Ascending aorta (tissue), 2 donors: ENCODE measurements at regions of chr13 and their contacts with region 1.

Region 1: DNA sequence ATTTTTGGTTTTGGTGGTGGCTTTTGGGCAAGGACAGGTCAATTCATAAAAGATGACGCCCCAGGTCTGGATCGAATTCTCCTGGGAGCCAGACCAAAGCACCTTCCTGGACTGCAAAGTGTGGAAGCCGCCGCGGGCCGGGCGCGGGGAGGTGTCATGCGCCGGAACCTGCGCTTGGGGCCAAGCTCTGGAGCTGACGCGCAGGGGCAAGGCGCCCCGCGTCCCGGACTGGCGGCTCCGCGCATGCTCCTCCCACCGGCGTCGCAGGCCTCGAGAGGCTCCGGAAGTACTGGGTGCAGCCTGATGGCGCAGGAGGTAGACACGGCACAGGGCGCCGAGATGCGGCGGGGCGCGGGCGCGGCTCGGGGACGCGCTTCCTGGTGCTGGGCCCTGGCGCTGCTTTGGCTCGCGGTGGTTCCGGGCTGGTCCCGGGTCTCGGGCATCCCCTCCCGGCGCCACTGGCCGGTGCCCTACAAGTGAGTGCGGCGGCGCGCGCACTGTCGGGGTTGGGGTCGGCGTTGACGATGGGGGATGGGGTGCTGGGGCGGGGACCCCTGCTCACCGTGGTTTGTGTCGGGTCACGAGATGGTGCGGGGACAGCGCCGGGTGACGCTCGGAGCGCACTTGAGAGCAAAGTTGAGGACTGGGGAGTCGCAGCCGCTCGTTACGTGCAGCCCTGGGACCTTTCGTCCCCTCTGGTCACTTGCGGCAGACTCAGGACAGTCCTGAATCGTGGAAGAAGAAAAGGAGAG is at the start of gene CLN5:
- DNase-seq: peak; percentile 82 to 97
- H3K4me3 ChIP-seq: peak within 1 kb of the TSS; percentile 68 to 75
- H3K27ac ChIP-seq: peak within 1 kb of the TSS; percentile 80 to 93
- H3K4me1 ChIP-seq: peaks cover 0 to 9% of the 10 kb centered on the region in 2 donors
- H3K27me3 ChIP-seq: no peaks in the 10 kb centered on the region
- CTCF ChIP-seq: no peak
- total RNA-seq, gene CLN5: 2.0 TPM

Region 2: DNA sequence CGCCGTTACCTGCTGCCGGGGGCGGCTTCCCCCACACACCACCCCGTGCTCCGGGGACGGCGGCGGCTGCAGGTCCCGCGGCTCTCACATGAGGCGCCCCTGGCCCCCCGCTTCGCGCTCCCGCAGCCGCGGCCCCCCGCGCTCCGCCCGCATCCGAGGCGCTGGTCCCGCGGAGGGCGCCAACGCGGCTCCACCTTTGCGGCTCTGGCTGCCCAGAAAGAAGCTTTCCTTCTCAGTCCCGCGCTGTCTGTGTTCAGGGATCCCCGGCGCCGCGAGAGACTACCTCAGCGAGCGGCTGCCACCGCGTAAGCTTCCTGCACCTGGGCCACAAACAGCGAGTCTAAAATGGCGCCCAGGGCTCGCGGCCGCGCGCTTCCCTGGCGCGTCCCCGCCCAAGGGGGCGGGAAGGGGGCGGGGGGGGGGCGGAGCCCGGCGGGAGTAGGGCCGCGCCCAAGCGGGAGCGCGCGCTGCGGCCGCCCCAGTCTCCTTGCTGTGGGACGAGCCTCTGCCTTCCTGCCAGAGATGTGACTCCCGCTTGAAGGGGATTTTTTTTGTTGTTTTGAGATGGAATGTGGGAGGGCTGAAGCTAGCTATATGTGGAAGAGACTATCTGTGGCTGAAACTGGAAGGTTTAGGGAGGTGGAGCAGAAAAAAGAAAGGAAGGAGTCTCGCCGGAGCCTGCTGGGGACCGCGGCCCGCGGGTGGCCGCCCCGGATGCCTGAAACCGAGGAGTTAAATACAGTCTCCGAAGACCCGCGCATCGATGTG is 35.0 kb after region 1 on chr13 and contains the start of gene FBXL3:
- intact Hi-C with region 1: loop called (anchors 1 kb)
- DNase-seq: peak; percentile 36 to 91
- H3K4me3 ChIP-seq: peak within 1 kb of the TSS; percentile 88 to 100
- H3K27ac ChIP-seq: peak within 1 kb of the TSS; percentile 95 to 100
- H3K4me1 ChIP-seq: peaks cover 0 to 6% of the 10 kb centered on the region in 2 donors
- H3K27me3 ChIP-seq: no peaks in the 10 kb centered on the region
- CTCF ChIP-seq: no peak
- total RNA-seq, gene FBXL3: 102 TPM